ENCODE measurements at regions of chr7 and their contacts with region 1.

Region 1: DNA sequence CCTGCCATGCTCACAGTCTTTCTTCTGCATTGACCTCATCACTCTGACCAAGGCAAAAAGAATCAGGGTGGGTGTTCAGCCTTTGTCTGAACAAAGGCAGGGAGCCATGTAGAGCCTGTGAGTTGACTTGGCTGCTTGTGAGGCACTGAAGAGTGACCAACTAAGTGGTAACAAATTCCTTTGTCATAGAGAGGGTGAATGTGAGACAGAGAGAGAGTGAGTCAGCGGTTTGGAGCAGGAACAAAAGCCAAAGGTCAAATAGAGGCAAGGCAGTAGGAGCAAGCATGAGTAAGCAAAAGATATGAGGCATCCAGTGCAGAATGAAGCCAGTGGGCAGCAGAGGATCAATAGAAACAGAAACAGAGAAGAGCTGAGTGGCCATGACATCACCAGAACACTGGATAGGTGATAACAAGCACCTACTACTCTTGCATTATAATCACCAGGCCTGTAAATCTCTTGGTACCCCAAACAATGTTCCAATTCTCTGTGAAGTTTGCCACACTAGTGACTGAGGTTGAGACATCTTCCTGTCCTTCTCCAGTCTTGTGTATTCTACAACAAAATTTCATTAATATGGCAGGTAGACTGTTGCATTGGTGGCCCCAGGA is 116.2 kb upstream of the LAMB4 start:
- DNase-seq: peak; percentile 98
- H3K4me3 ChIP-seq: no peak overlapping the region
- H3K27ac ChIP-seq: peak overlapping the region; percentile 78
- H3K4me1 ChIP-seq: peaks cover 22% of the 10 kb centered on the region
- H3K27me3 ChIP-seq: no peaks in the 10 kb centered on the region
- CTCF ChIP-seq: peak; percentile 45 to 50

Region 2: GRCh38 chr7:108222236-108222892 is 24.0 kb before region 1 on chr7:
- CTCF ChIA-PET with region 1: no interaction called
- dilution Hi-C with region 1: no loop called
- in situ Hi-C with region 1: no loop called
- intact Hi-C with region 1: no loop called
- DNase-seq: no peak
- H3K4me3 ChIP-seq: no peak overlapping the region
- H3K27ac ChIP-seq: no peak overlapping the region
- H3K4me1 ChIP-seq: no peaks in the 10 kb centered on the region
- H3K27me3 ChIP-seq: no peaks in the 10 kb centered on the region
- CTCF ChIP-seq: no peak

Region 3: GRCh38 chr7:108308903-108309302 is 62.6 kb after region 1 on chr7:
- CTCF ChIA-PET with region 1: no interaction called
- dilution Hi-C with region 1: no loop called
- in situ Hi-C with region 1: no loop called
- intact Hi-C with region 1: loop called (anchors 1 kb)
- DNase-seq: peak; percentile 80
- H3K4me3 ChIP-seq: no peak overlapping the region
- H3K27ac ChIP-seq: peak overlapping the region; percentile 99
- H3K4me1 ChIP-seq: peaks cover 56% of the 10 kb centered on the region
- H3K27me3 ChIP-seq: no peaks in the 10 kb centered on the region
- CTCF ChIP-seq: no peak

Region 4: DNA sequence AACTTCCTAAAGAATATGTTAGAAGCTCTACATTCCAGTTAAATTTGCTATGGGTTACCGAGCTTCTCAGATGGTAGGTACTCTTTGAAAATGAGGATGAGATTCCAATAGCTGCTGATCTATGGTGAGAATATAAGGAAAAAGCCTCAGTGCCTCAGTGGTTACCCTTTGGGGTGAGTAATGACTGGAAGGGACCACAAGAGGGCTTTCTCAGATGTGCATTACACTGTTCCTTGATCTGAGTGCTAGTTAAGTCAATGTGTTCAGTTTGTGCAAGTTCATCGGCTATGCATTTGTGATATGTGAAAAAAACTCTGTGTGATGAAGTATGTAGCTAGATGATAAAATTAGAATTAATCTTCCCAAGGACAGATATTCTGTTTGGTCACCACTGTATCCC is 206.4 kb after region 1 on chr7:
- CTCF ChIA-PET with region 1: no interaction called
- dilution Hi-C with region 1: no loop called
- in situ Hi-C with region 1: no loop called
- intact Hi-C with region 1: loop called (anchors 1 kb)
- DNase-seq: peak; percentile 29
- H3K4me3 ChIP-seq: no peak overlapping the region
- H3K27ac ChIP-seq: no peak overlapping the region
- H3K4me1 ChIP-seq: peaks cover 6% of the 10 kb centered on the region
- H3K27me3 ChIP-seq: no peaks in the 10 kb centered on the region
- CTCF ChIP-seq: peak; percentile 40 to 65